ENCODE measurements at regions of chr4 and their contacts with region 1.

Region 1: DNA sequence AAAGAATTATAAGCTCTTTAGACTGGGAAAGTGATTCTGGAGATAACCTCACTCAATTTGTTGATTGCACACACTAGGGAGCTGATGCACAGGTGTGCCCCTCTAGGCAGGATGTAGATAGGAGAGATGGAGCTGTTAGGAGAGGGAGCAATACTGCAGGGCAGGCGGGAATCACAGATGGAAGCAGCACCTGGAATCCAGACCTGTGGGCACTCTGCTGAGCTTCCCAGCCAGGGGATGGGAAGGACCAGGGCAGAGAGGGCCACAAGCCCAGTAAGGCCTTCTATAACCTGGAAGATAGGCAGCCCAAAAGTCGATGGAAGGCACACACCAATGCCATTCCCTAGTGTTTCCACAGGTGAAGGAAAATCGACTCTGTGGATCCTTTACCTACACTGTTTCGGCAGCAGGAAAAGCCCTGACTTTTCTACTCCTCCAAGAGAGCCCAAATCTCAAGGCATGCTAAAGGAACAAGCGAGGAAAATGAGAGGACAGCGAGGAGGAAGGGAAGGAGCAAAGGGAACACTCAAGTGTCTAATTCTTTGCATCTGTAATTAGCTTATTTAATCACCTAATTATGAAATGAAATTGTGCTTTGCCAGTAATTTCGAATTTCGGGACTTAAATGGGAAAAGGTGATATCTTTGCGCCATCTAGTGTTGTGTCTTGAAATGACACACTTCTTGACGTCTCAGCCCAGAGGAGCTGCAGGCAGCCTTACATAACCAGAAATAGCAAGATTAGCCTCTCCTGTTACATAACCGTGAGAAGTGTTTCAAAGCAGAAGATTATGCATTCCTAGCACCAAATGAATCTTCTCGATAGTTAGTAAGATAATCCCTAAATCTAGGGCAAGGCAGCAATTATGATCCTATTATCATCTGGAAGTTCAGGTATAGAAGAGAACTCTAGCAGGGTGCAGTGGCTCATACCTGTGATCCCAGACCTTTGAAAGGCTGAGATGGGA is 31.0 kb upstream of the TLR3 start:
- DNase-seq: peak; percentile 65 to 81 (median 72)
- ATAC-seq: peak; percentile 95
- H3K4me3 ChIP-seq: no peak overlapping the region
- H3K27ac ChIP-seq: no peak overlapping the region
- H3K4me1 ChIP-seq: no peaks in the 10 kb centered on the region
- H3K27me3 ChIP-seq: no peaks in the 10 kb centered on the region
- CTCF ChIP-seq: peak; percentile 50 to 94 (median 91)
- POLR2A ChIP-seq: no peak

Region 2: GRCh38 chr4:185634066-185634652 is 403.8 kb before region 1 on chr4:
- intact Hi-C with region 1: loop called (anchors 10 kb)
- DNase-seq: no peak
- ATAC-seq: no peak
- H3K4me3 ChIP-seq: no peak overlapping the region
- H3K27ac ChIP-seq: no peak overlapping the region
- H3K4me1 ChIP-seq: peaks cover 7% of the 10 kb centered on the region
- H3K27me3 ChIP-seq: no peaks in the 10 kb centered on the region
- CTCF ChIP-seq: peak in 6 of 7 experiments; percentile 47 to 75 (median 60)
- POLR2A ChIP-seq: no peak

Region 3: DNA sequence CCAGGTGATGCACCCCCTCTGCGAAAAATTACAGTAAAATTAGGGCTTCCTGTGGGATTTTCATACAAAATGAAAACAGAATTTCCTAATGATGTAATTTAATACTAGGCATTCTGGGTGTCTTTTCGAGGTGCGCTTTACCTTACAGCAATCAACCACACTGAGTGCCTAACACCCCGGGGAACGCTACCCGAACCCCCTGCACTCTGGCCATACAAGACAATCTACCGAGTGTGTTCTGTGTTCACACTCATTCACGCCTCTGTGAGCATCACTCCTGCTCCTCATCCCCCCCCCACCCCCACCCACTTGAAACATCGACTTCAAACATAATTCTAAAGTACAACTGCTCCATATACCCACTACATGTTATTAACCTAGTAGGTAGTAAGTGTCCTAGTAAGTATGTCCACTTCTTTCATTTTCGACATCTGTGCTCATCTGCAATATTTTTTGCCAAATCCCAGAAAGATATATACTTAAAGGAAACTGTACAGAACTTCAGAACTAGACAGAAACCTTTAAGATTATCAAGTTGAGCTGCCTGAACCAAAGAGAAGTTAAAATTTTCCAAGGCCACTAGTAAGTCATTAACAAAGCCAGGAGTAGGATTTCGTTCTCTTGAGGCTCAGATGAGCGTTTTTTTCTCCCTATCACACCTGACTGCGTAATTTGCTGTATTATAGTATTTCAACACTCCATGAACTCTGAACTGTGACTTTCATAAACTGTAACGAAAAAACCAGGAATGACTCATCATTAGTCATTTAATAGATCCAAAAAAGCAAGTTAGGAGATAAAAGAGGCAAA is 605.7 kb after region 1 on chr4:
- intact Hi-C with region 1: no loop called
- DNase-seq: peak in 2 of 4 donors; percentile 27 to 65
- ATAC-seq: peak; percentile 95
- H3K4me3 ChIP-seq: no peak overlapping the region
- H3K27ac ChIP-seq: peak overlapping the region in 3 of 4 donors; percentile 49 to 78 (median 58)
- H3K4me1 ChIP-seq: peaks cover 33% of the 10 kb centered on the region
- H3K27me3 ChIP-seq: no peaks in the 10 kb centered on the region
- CTCF ChIP-seq: no peak
- POLR2A ChIP-seq: no peak